Kidney (tissue), 22 donors: ENCODE measurements at regions of chr18 and their contacts with region 1.

Region 1: DNA sequence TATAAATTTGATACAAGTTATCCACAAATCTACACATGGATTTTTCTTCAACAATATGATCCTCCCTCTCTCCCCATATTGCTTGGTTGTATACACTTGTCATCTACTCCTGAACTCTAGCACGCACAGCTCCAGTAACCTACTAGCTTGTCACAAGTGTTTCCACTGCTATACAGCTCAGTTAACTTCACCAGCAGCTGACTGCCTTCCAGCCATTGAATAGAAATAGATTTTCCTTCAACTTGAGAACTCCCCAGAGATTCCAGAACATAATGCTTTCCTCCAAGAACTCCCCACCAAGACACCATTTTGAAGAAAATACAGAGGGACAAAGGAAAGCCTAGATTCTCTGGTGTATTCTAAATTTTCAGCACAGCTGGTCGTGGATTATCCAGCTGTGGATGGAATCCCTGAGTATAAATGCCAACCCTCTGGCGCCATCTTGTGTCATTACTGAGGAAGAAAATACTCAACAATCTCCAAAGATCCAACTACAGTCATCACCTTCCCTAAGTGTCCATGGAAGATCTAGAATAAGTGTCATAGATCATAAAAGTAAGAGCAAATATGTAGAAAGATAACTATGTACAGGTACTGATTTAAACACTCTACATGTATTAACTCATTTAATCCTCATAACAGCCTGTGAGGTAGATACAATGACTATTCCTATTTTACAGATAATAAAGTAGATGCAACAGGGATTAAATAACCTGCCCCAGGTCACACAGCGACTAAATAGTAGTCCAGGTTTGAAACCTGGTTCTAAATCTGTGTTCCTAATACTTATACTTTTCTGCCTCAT is 156.7 kb downstream of the ARHGAP28 start:
- DNase-seq: peak in 3 of 5 donors; percentile 53 to 89 (median 84)
- H3K4me3 ChIP-seq: no peak overlapping the region
- H3K27ac ChIP-seq: no peak overlapping the region
- H3K4me1 ChIP-seq: no peaks in the 10 kb centered on the region
- H3K27me3 ChIP-seq: no peaks in the 10 kb centered on the region
- CTCF ChIP-seq: peak; percentile 77

Region 2: GRCh38 chr18:6120820-6121279 is 765.3 kb before region 1 on chr18:
- intact Hi-C with region 1: no loop called
- DNase-seq: no peak
- H3K4me3 ChIP-seq: no peak overlapping the region
- H3K27ac ChIP-seq: no peak overlapping the region
- H3K4me1 ChIP-seq: no peaks in the 10 kb centered on the region
- H3K27me3 ChIP-seq: no peaks in the 10 kb centered on the region
- CTCF ChIP-seq: no peak

Region 3: DNA sequence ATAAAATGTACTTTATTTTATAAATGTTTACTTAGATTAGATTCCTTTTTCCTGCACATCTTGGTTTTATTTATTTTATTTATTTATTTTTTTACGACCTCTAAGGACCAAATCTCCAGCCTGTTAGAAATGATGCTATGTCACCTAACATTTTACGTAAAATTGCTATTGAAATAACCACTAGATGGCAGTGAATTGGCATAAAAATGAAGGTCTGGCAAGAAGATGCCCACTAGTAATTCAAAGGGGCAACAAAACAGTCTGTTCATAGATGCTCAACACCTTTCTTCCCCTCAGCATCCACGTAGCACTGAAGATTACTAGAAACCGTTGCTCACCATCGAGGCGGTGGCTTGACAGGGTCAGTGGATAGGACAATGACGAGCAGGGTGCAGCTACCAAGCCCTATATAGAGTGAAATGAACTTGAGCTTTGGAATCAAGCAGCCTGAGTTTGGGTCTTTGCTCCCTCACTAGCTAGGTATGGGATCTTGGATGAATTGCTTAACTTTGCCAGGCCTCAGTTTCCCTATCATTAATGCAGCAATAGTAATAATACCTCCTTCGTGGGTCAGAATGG is 342.8 kb before region 1 on chr18:
- intact Hi-C with region 1: loop called (anchors 10 kb)
- DNase-seq: peak in 2 of 5 donors; percentile 66 to 69
- H3K4me3 ChIP-seq: no peak overlapping the region
- H3K27ac ChIP-seq: no peak overlapping the region
- H3K4me1 ChIP-seq: no peaks in the 10 kb centered on the region
- H3K27me3 ChIP-seq: no peaks in the 10 kb centered on the region
- CTCF ChIP-seq: peak; percentile 47

Region 4: GRCh38 chr18:6960656-6961055 is 74.5 kb after region 1 on chr18:
- intact Hi-C with region 1: no loop called
- DNase-seq: no peak
- H3K4me3 ChIP-seq: no peak overlapping the region
- H3K27ac ChIP-seq: no peak overlapping the region
- H3K4me1 ChIP-seq: no peaks in the 10 kb centered on the region
- H3K27me3 ChIP-seq: no peaks in the 10 kb centered on the region
- CTCF ChIP-seq: no peak